Heart left ventricle (tissue), 16 donors: ENCODE measurements at regions of chr20 and their contacts with region 1.

Region 1: DNA sequence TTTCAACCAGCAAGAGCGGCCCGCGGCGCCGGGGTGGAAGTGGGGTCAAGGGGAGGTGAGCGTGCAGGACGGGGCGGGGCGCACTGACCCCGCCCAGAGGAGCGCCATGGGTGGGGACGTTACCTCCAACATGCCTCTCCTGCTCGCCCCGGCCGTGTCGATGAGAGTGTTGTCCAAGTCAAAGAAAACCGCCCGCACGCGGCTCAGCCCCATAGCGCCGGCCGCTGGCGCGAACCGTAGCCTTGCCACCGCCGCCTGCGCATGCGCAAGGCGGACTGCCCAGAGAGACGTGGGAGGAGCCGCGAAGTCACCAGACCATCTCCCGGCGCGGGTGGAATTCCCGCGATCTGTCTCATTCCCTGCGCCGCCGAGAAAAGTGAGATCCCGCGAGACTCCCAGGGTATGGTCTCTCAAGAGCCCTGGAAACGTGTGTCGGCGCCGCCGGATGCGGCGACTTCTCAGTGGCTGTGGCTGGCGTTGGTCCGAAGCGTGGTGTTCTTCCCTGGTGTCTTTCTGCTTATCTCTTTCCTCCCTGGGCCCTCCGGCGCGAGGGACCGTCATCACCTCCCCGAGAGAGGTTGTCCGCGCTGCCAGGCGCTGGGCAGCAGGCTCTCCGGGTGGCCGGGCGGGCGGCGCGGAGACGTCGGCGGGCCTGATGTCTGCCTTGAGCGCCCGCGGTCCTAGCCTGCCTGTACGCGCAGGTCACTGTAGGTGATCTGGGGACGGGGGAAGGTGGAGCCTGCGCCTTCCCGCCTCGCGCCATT is at the start of gene NANP:
- DNase-seq: peak; percentile 95 to 98 (median 97)
- ATAC-seq: peak; percentile 94 to 97 (median 96)
- H3K4me3 ChIP-seq: peak within 1 kb of the TSS; percentile 72 to 99 (median 84)
- H3K27ac ChIP-seq: peak within 1 kb of the TSS; percentile 53 to 97 (median 87)
- H3K4me1 ChIP-seq: peaks cover 0 to 23% (median 15%) of the 10 kb centered on the region in 12 donors
- H3K27me3 ChIP-seq: no peaks in the 10 kb centered on the region
- CTCF ChIP-seq: peak in 2 of 12 donors; percentile 4 to 9
- POLR2A ChIP-seq: peak in 1 of 2 donors; percentile 71
- total RNA-seq, gene NANP: 2.5 to 4.4 (median 3.1) TPM

Region 2: DNA sequence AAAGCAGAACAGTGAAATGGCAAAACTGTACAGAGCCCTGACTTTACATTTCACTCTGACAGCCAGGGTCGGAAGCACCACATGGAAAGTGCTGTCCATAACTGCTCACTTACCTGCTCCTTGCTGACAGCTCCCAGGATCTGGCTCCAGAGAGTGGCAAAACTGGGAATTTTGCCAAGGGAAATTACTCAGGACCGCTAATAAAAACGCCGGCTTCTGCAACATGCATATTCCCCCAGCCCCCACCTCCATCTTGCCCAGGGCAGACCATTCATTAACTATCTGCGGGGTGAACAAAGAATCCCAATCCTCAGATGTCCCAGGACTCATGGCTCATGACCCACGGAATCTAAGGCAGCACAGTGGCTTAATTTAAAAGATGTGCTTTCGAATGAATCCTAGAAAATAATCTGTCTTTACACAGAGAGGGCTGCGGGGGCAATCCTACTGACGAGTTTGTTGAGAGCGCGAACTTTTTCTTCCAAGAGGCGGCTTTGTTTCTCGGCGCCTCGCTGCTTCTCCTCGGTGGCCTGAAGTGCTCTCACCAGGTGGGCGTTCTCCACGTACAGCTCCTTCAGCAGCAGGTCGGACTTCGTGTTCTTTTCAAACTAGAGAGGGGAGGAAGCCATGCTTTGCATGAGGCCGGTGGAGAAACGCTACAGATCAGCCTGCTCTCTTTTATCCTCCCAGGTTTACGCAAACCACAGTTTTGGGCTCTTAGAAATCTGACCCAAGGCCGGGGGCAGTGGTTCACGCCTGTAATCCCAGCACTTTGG is 170.7 kb before region 1 on chr20:
- intact Hi-C with region 1: loop called in 1 of 10 experiments (anchors 10 kb)
- DNase-seq: no peak
- ATAC-seq: peak; percentile 32 to 55 (median 41)
- H3K4me3 ChIP-seq: no peak overlapping the region
- H3K27ac ChIP-seq: no peak overlapping the region
- H3K4me1 ChIP-seq: peaks cover 0 to 7% (median 0%) of the 10 kb centered on the region in 12 donors
- H3K27me3 ChIP-seq: no peaks in the 10 kb centered on the region
- CTCF ChIP-seq: no peak
- POLR2A ChIP-seq: no peak

Region 3: GRCh38 chr20:25865380-25866118 is 241.6 kb after region 1 on chr20:
- intact Hi-C with region 1: loop called in 1 of 10 experiments (anchors 5 kb)
- DNase-seq: peak; percentile 76 to 91 (median 86)
- ATAC-seq: peak in 3 of 4 donors; percentile 52 to 59 (median 58)
- H3K4me3 ChIP-seq: peak overlapping the region; percentile 2 to 61 (median 48)
- H3K27ac ChIP-seq: peak overlapping the region in 3 of 12 donors; percentile 25 to 53 (median 47)
- H3K4me1 ChIP-seq: peaks cover 0 to 58% (median 20%) of the 10 kb centered on the region in 12 donors
- H3K27me3 ChIP-seq: peaks cover 0 to 9% (median 0%) of the 10 kb centered on the region in 9 donors
- CTCF ChIP-seq: peak in 1 of 12 donors; percentile 18
- POLR2A ChIP-seq: peak in 1 of 2 donors; percentile 16